K562 (cell line): ENCODE measurements at regions of chr15 and their contacts with region 1.

Region 1: GRCh38 chr15:55407949-55408791 is at the starts of genes CCPG1 and PIERCE2:
- DNase-seq: peak; percentile 89 to 95 (median 90)
- ATAC-seq: peak; percentile 84
- H3K4me3 ChIP-seq: peak within 1 kb of the TSS; percentile 69
- H3K27ac ChIP-seq: peak within 1 kb of the TSS; percentile 91
- H3K4me1 ChIP-seq: peaks cover 12 to 16% of the 10 kb centered on the region in 2 experiments
- H3K27me3 ChIP-seq: no peaks in the 10 kb centered on the region
- CTCF ChIP-seq: peak; percentile 73 to 98 (median 77)
- EP300 ChIP-seq: no peak
- POLR2A ChIP-seq: peak; percentile 83
- RAD21 ChIP-seq: peak; percentile 29 to 39; a peak in 2 of 4 replicates
- polyA plus RNA-seq, gene CCPG1: 37.1 to 41.1 TPM
- polyA plus RNA-seq, gene PIERCE2: 4.0 to 4.2 TPM

Region 2: DNA sequence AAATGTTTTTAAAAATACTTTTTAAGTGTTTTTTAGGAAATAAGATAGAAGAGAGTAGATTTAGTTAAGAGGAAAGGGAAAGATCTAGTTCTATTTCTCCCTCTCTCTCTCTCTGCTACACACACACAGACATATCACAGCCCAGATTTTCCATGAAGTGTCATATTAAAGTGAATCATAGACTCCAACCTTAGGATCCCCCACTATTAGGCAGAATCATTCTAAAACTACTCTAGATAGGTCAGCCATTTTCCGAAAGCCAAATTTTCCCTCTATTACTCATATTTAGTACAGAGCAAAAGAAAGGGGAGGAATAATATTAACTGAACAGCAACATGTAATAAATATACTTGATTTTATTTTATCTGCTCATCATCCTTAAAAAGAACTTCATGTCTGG is 166.3 kb before region 1 on chr15:
- CTCF ChIA-PET with region 1: no interaction called
- POLR2A ChIA-PET with region 1: no interaction called
- in situ Hi-C with region 1: no loop called
- intact Hi-C with region 1: loop called (anchors 5 kb)
- DNase-seq: no peak
- ATAC-seq: no peak
- H3K4me3 ChIP-seq: no peak overlapping the region
- H3K27ac ChIP-seq: no peak overlapping the region; the same call in 2 of the 3 replicates
- H3K4me1 ChIP-seq: peaks cover 0 to 43% of the 10 kb centered on the region in 2 experiments; a peak in 3 of 5 replicates
- H3K27me3 ChIP-seq: no peaks in the 10 kb centered on the region
- CTCF ChIP-seq: no peak
- EP300 ChIP-seq: no peak
- POLR2A ChIP-seq: no peak
- RAD21 ChIP-seq: no peak

Region 3: GRCh38 chr15:55318588-55319494 is 89.3 kb before region 1 on chr15 and contains the starts of genes PIGB and PIGBOS1:
- CTCF ChIA-PET with region 1: no interaction called
- POLR2A ChIA-PET with region 1: interaction called, 13 read pairs
- in situ Hi-C with region 1: no loop called
- intact Hi-C with region 1: loop called (anchors 2 kb)
- DNase-seq: peak; percentile 65 to 93 (median 72)
- ATAC-seq: peak; percentile 91
- H3K4me3 ChIP-seq: peak within 1 kb of the TSS; percentile 69
- H3K27ac ChIP-seq: peak within 1 kb of the TSS; percentile 96
- H3K4me1 ChIP-seq: peaks cover 4 to 9% of the 10 kb centered on the region in 2 experiments; a peak in 2 of 5 replicates
- H3K27me3 ChIP-seq: no peaks in the 10 kb centered on the region
- CTCF ChIP-seq: no peak
- EP300 ChIP-seq: peak; percentile 29; the same call in 1 of the 2 replicates
- POLR2A ChIP-seq: peak; percentile 94
- RAD21 ChIP-seq: no peak
- polyA plus RNA-seq, gene PIGB: 21.0 to 24.4 TPM
- polyA plus RNA-seq, gene PIGBOS1: 70.4 to 76.2 TPM

Region 4: GRCh38 chr15:55394694-55395093 is 13.5 kb before region 1 on chr15:
- CTCF ChIA-PET with region 1: interaction called, 3 read pairs
- POLR2A ChIA-PET with region 1: interaction called, 21 read pairs
- in situ Hi-C with region 1: no loop called
- intact Hi-C with region 1: no loop called
- DNase-seq: no peak
- ATAC-seq: no peak
- H3K4me3 ChIP-seq: no peak overlapping the region
- H3K27ac ChIP-seq: no peak overlapping the region
- H3K4me1 ChIP-seq: peaks cover 12 to 19% of the 10 kb centered on the region in 2 experiments
- H3K27me3 ChIP-seq: no peaks in the 10 kb centered on the region
- CTCF ChIP-seq: no peak
- EP300 ChIP-seq: no peak
- POLR2A ChIP-seq: no peak
- RAD21 ChIP-seq: no peak